Panc1 (cell line): ENCODE measurements at regions of chrX and their contacts with region 1.

Region 1: GRCh38 chrX:24259544-24260240 is 54.2 kb downstream of the SUPT20HL2 start:
- DNase-seq: no peak
- ATAC-seq: no peak
- H3K4me3 ChIP-seq: no peak overlapping the region
- H3K27ac ChIP-seq: no peak overlapping the region
- H3K4me1 ChIP-seq: no peaks in the 10 kb centered on the region
- H3K27me3 ChIP-seq: no peaks in the 10 kb centered on the region
- CTCF ChIP-seq: peak; percentile 72

Region 2: GRCh38 chrX:24133280-24133679 is 126.4 kb before region 1 on chrX:
- CTCF ChIA-PET with region 1: no interaction called
- POLR2A ChIA-PET with region 1: interaction called, 11 read pairs
- in situ Hi-C with region 1: no loop called
- intact Hi-C with region 1: no loop called
- DNase-seq: no peak
- ATAC-seq: peak; percentile 82
- H3K4me3 ChIP-seq: peak overlapping the region in 1 of 2 experiments; percentile 42; a peak in 2 of 4 replicates
- H3K27ac ChIP-seq: peak overlapping the region; percentile 90
- H3K4me1 ChIP-seq: no peaks in the 10 kb centered on the region; the same call in 1 of the 2 replicates
- H3K27me3 ChIP-seq: no peaks in the 10 kb centered on the region
- CTCF ChIP-seq: no peak; the same call in 1 of the 2 replicates

Region 3: GRCh38 chrX:24276015-24276414 is 16.3 kb after region 1 on chrX:
- CTCF ChIA-PET with region 1: no interaction called
- POLR2A ChIA-PET with region 1: no interaction called
- in situ Hi-C with region 1: no loop called
- intact Hi-C with region 1: no loop called
- DNase-seq: no peak
- ATAC-seq: no peak
- H3K4me3 ChIP-seq: no peak overlapping the region
- H3K27ac ChIP-seq: no peak overlapping the region
- H3K4me1 ChIP-seq: no peaks in the 10 kb centered on the region
- H3K27me3 ChIP-seq: no peaks in the 10 kb centered on the region
- CTCF ChIP-seq: no peak

Region 4: GRCh38 chrX:24339911-24340310 is 80.2 kb after region 1 on chrX:
- CTCF ChIA-PET with region 1: interaction called, 10 read pairs
- POLR2A ChIA-PET with region 1: no interaction called
- in situ Hi-C with region 1: no loop called
- intact Hi-C with region 1: no loop called
- DNase-seq: no peak
- ATAC-seq: no peak
- H3K4me3 ChIP-seq: no peak overlapping the region
- H3K27ac ChIP-seq: no peak overlapping the region
- H3K4me1 ChIP-seq: no peaks in the 10 kb centered on the region
- H3K27me3 ChIP-seq: no peaks in the 10 kb centered on the region
- CTCF ChIP-seq: no peak

Region 5: DNA sequence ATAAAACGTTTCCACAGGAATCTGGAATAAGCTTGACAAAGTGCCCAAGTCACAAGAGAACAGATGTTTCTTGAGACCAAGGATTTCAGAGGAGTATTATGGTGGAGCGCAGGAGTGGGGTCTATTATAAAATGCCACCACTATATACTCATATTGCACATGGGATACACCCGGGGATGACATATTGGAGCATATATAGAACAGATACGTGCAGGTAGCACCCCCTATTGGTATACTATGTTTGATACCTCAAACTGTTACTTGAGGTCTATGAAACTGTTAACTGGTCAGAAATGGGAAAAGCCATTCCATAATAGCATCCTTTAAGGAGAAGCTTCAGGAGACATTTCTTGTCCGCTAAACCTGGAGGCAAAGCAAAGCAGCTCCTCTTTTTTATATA is 301.4 kb after region 1 on chrX:
- CTCF ChIA-PET with region 1: interaction called, 11 read pairs
- POLR2A ChIA-PET with region 1: no interaction called
- in situ Hi-C with region 1: no loop called
- intact Hi-C with region 1: no loop called
- DNase-seq: no peak
- ATAC-seq: no peak
- H3K4me3 ChIP-seq: no peak overlapping the region
- H3K27ac ChIP-seq: no peak overlapping the region
- H3K4me1 ChIP-seq: no peaks in the 10 kb centered on the region
- H3K27me3 ChIP-seq: no peaks in the 10 kb centered on the region
- CTCF ChIP-seq: peak; percentile 34; the same call in 1 of the 2 replicates